Aorta (tissue), 5 donors: ENCODE measurements at regions of chr11 and their contacts with region 1.

Region 1: GRCh38 chr11:69088676-69089146 is 40.0 kb downstream of the TPCN2 start:
- DNase-seq: peak in 1 of 2 donors; percentile 73
- ATAC-seq: peak; percentile 73
- H3K4me3 ChIP-seq: no peak overlapping the region
- H3K27ac ChIP-seq: no peak overlapping the region
- H3K4me1 ChIP-seq: no peaks in the 10 kb centered on the region
- H3K27me3 ChIP-seq: no peaks in the 10 kb centered on the region

Region 2: DNA sequence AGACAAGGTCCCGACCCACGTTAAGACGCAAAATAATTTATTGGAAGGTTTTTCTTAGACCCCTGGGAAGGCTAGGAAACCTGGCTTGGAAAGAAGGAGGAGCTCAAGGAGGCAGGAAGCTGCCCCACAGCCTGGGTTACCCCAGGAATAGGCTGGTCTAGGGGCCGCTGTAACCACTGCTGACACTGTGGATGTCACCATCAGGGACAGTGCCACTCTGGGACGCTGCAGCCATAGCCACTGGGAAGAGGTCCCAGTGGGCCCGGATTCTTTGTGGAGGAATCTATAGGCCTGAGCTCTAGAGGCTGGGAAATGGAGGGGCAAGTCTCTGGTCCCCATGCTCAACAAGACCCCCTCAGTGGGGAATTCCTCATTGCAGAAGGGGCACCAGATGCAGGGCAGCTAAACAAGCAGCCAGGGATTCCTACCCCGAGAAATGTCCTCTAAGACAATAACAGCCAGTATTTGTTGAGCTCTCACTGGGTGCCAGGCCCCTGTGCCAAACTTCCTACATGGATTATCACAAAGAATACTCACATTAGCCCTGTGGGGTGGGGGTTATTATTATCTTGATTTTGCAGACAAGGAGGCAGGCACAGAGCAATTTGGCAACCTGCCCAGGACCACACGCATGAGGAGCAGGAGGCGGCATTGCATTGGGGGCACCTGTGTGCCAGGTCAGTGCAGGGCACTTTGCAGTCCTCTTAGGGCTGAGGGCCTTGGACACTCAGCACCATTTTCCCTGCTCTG is 948.0 kb before region 1 on chr11:
- intact Hi-C with region 1: no loop called
- DNase-seq: peak in 1 of 2 donors; percentile 43
- ATAC-seq: no peak
- H3K4me3 ChIP-seq: no peak overlapping the region
- H3K27ac ChIP-seq: no peak overlapping the region
- H3K4me1 ChIP-seq: no peaks in the 10 kb centered on the region
- H3K27me3 ChIP-seq: no peaks in the 10 kb centered on the region

Region 3: DNA sequence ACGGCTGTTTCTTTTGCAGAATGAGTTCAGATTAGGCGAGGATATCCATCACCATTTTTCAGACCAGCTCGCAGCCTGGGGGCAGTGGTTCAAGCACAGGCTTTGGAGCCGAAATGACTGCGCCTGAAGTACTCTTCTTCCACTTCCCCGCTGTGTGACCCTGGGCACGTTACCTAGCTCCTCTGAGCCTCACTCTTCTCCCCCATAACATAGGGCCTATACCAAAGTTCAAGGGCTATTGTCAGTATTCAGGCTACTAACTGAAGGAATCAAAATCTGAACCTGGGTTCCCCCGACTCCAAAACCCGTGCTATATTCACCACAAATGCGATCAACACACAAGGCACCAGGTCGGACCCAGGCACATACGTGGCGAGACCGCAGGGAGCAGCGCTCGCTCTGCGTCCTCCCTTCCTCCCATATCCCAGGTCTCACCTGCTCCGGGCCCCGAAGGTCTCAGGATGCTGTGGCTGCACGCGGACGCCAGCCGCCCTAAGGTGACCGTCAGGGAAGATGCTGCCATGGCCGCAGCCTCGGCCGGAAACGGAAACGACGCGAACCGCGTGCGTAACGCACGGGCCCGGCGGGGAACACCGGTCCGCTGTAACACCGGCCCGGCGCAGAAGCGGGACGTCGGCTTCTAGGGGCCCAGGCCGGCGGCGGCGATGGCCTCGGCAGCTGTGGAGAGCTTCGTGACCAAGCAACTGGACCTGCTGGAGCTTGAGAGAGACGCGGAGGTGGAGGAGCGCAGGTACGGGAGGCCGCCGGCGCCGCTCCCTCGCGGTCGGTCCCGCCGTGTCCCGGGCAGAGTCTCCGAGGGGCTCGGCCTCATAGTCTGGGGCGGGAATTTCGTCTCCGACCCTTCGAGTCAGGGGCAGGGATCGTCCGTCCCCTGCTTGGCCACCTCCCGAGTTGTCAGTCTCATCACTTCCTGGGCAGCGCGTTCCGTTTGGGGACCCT is 185.1 kb before region 1 on chr11 and contains the starts of genes IGHMBP2 and MRPL21:
- intact Hi-C with region 1: loop called in 1 of 2 experiments (anchors 10 kb)
- DNase-seq: peak; percentile 88 to 95
- ATAC-seq: peak; percentile 98
- H3K4me3 ChIP-seq: peak within 1 kb of the TSS; percentile 7 to 79
- H3K27ac ChIP-seq: peak within 1 kb of the TSS; percentile 0 to 4
- H3K4me1 ChIP-seq: no peaks in the 10 kb centered on the region
- H3K27me3 ChIP-seq: no peaks in the 10 kb centered on the region
- total RNA-seq, gene IGHMBP2: 24.6 to 33.6 TPM
- total RNA-seq, gene MRPL21: 31.7 to 37.0 TPM

Region 4: GRCh38 chr11:69157156-69157821 is 68.6 kb after region 1 on chr11:
- intact Hi-C with region 1: no loop called
- DNase-seq: peak; percentile 69 to 88
- ATAC-seq: peak; percentile 75
- H3K4me3 ChIP-seq: no peak overlapping the region
- H3K27ac ChIP-seq: peak overlapping the region in 1 of 2 donors; percentile 4
- H3K4me1 ChIP-seq: no peaks in the 10 kb centered on the region
- H3K27me3 ChIP-seq: no peaks in the 10 kb centered on the region